Activated B cell treated with CpG ODN at 0.5 μM for 24 hours (primary cell): ENCODE measurements at regions of chrX and their contacts with region 1.

Region 1: GRCh38 chrX:101390664-101391525 is at the start of gene RPL36A:
- DNase-seq: peak; percentile 61
- ATAC-seq: peak; percentile 76
- H3K4me3 Mint-ChIP-seq: peak within 1 kb of the TSS; percentile 95
- H3K27ac Mint-ChIP-seq: peak within 1 kb of the TSS; percentile 94
- H3K4me1 Mint-ChIP-seq: peaks cover 47% of the 10 kb centered on the region
- H3K27me3 Mint-ChIP-seq: no peaks in the 10 kb centered on the region
- CTCF ChIP-seq: no peak
- total RNA-seq, gene RPL36A: 234 and 287 TPM in 2 replicates

Region 2: GRCh38 chrX:101097546-101098453 is 293.1 kb before region 1 on chrX and contains the start of gene CENPI:
- CTCF ChIA-PET with region 1: no interaction called
- POLR2A ChIA-PET with region 1: no interaction called
- intact Hi-C with region 1: loop called (anchors 10 kb)
- DNase-seq: peak; percentile 78
- ATAC-seq: peak; percentile 99
- H3K4me3 Mint-ChIP-seq: peak within 1 kb of the TSS; percentile 86
- H3K27ac Mint-ChIP-seq: peak within 1 kb of the TSS; percentile 91
- H3K4me1 Mint-ChIP-seq: peaks cover 9% of the 10 kb centered on the region
- H3K27me3 Mint-ChIP-seq: no peaks in the 10 kb centered on the region
- CTCF ChIP-seq: no peak
- total RNA-seq, gene CENPI: 2.6 and 3.1 TPM in 2 replicates

Region 3: GRCh38 chrX:101348452-101349192 is 42.3 kb before region 1 on chrX and contains the start of gene TIMM8A:
- CTCF ChIA-PET with region 1: interaction called, 10 read pairs
- POLR2A ChIA-PET with region 1: interaction called, 27 read pairs
- intact Hi-C with region 1: loop called (anchors 1 kb)
- DNase-seq: peak; percentile 71
- ATAC-seq: peak; percentile 99
- H3K4me3 Mint-ChIP-seq: peak within 1 kb of the TSS; percentile 91
- H3K27ac Mint-ChIP-seq: peak within 1 kb of the TSS; percentile 89
- H3K4me1 Mint-ChIP-seq: peaks cover 13% of the 10 kb centered on the region
- H3K27me3 Mint-ChIP-seq: no peaks in the 10 kb centered on the region
- CTCF ChIP-seq: no peak
- total RNA-seq, gene TIMM8A: 16.8 and 17.1 TPM in 2 replicates

Region 4: GRCh38 chrX:101377547-101377946 is 13.3 kb before region 1 on chrX:
- CTCF ChIA-PET with region 1: interaction called, 3 read pairs
- POLR2A ChIA-PET with region 1: interaction called, 18 read pairs
- intact Hi-C with region 1: no loop called
- DNase-seq: no peak
- ATAC-seq: peak; percentile 92
- H3K4me3 Mint-ChIP-seq: peak overlapping the region; percentile 41
- H3K27ac Mint-ChIP-seq: peak overlapping the region; percentile 83
- H3K4me1 Mint-ChIP-seq: peaks cover 52% of the 10 kb centered on the region
- H3K27me3 Mint-ChIP-seq: no peaks in the 10 kb centered on the region
- CTCF ChIP-seq: no peak

Region 5: DNA sequence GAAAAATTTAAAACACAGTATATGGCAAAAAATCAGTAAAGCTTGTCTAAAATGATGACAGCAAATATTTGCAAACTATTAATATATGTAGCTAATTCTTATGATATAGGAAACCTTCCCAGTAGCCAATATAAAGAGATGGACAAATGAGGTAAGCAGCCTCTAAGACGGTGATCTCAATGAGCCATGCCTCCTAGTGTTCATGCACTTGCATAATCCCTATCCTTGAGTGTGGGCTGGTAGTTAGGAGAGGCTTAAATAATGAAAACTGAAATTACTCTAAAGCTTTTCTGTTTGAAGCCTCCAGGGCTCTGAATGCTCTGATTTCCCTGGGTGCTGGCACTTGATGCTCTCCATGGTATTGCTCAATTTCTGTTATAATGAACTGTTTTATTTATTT is 69.8 kb after region 1 on chrX:
- CTCF ChIA-PET with region 1: no interaction called
- POLR2A ChIA-PET with region 1: no interaction called
- intact Hi-C with region 1: no loop called
- DNase-seq: no peak
- ATAC-seq: no peak
- H3K4me3 Mint-ChIP-seq: no peak overlapping the region
- H3K27ac Mint-ChIP-seq: no peak overlapping the region
- H3K4me1 Mint-ChIP-seq: no peaks in the 10 kb centered on the region
- H3K27me3 Mint-ChIP-seq: no peaks in the 10 kb centered on the region
- CTCF ChIP-seq: no peak

Region 6: GRCh38 chrX:101602077-101602476 is 211.2 kb after region 1 on chrX:
- CTCF ChIA-PET with region 1: no interaction called
- POLR2A ChIA-PET with region 1: no interaction called
- intact Hi-C with region 1: no loop called
- DNase-seq: no peak
- ATAC-seq: no peak
- H3K4me3 Mint-ChIP-seq: no peak overlapping the region
- H3K27ac Mint-ChIP-seq: no peak overlapping the region
- H3K4me1 Mint-ChIP-seq: no peaks in the 10 kb centered on the region
- H3K27me3 Mint-ChIP-seq: no peaks in the 10 kb centered on the region
- CTCF ChIP-seq: no peak

Region 7: GRCh38 chrX:101931488-101932248 is 540.8 kb after region 1 on chrX and contains the start of gene ZMAT1:
- CTCF ChIA-PET with region 1: no interaction called
- POLR2A ChIA-PET with region 1: interaction called, 10 read pairs
- intact Hi-C with region 1: no loop called
- DNase-seq: peak; percentile 74
- ATAC-seq: peak; percentile 85
- H3K4me3 Mint-ChIP-seq: peak within 1 kb of the TSS; percentile 87
- H3K27ac Mint-ChIP-seq: peak within 1 kb of the TSS; percentile 93
- H3K4me1 Mint-ChIP-seq: peaks cover 12% of the 10 kb centered on the region
- H3K27me3 Mint-ChIP-seq: no peaks in the 10 kb centered on the region
- CTCF ChIP-seq: no peak
- total RNA-seq, gene ZMAT1: 14.8 and 19.8 TPM in 2 replicates